PC-9 (cell line): ENCODE measurements at regions of chr17 and their contacts with region 1.

Region 1: DNA sequence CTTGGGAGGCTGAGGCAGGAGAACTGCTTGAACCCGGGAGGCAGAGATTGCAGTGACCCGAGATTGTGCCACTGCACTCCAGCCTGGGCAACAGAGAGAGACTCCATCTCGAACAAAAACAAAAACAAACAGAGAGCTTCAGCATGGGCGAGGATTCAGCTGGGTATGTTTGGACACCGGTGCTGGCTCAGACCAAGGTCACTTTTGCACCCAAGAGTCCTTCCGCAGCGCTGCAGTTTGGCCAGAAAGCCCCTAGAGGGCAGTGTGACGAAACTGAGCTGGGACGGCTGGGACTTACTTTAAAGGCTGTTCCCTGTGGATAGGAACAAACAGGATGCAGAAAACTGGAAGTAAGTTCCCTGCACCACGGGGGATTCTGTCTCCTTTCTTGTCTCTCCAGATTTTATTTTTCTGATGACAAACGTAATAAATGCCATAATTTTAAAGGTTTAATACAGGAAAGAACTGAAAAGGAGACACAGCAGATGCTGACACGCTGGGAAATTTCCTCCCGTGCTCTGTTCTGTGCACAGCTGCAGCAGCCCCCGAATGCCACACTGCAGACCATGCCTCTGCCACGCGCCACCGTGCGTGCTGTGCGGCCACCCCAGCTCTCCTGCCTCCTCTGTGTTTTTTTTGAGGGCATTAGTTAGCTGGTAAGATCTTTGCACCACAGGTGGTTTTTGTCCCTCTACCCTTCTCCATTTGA is 25.2 kb upstream of the USP36 start:
- DNase-seq: peak; percentile 57 to 78
- H3K4me3 ChIP-seq: no peak overlapping the region
- H3K27ac ChIP-seq: no peak overlapping the region
- H3K4me1 ChIP-seq: peaks cover 14% of the 10 kb centered on the region
- H3K27me3 ChIP-seq: no peaks in the 10 kb centered on the region
- CTCF ChIP-seq: peak; percentile 85

Region 2: DNA sequence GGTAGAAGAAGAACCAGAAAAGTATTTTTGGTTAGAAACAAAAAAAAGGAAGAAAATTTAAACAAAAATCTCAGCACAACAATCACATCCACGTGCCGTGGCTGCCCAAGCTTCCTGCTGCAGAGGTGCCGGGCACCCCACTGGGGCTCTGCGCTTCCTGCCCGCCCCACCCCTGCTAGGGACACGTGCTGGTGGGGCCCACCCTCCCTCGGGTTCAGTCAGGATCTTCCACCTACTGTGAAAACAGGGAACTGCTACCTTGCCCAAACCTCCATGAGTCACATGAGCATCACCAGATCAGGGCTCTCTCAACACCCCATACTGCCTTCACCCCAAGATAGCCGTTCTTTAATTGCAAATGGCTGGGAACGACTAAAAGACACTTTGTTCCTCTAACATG is 59.4 kb before region 1 on chr17:
- CTCF ChIA-PET with region 1: no interaction called
- POLR2A ChIA-PET with region 1: no interaction called
- intact Hi-C with region 1: no loop called
- DNase-seq: no peak
- H3K4me3 ChIP-seq: no peak overlapping the region
- H3K27ac ChIP-seq: no peak overlapping the region
- H3K4me1 ChIP-seq: no peaks in the 10 kb centered on the region
- H3K27me3 ChIP-seq: no peaks in the 10 kb centered on the region
- CTCF ChIP-seq: no peak

Region 3: DNA sequence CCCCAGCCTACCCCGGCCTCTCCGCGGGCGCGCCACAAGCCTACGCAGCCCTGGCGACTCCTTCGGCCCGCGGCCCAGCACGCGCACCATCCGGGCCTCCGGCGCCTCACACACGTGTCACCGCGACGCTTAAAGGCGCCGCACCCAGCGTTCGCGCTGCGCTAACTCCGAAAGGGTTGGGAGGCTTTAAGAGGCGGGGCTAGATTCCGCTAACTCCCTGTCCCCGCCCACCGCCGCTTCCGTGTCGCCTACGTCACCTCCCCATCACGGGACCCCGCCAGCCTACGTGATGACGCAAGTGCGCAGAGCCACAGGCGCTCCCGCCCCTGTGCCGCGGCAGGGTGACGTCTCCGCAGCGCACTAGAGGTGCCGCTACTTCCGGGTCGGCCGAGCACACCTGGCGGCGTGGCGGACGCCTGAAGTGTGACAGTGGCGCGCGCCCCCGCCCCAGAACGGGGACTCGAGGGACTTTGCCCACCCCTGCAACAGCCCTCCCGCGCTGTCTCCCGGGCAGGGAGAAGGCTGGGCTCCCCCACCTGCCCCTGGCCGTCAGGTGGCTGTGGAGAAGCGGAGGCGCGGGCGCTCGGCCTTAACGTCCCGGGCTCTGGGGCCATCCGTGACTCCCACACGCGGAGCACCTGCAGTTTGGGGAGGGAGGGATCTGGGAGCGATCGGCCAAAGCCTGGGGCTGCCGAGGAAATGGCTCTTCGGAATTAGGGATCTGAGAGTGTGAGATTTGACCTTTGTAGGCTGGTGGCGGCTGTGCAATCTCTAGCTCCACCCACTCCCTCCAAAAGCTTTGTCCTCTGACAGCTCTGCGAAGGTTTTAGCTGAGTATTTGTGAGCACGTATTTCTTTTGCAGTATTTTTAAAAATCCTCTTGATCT is 24.9 kb before region 1 on chr17 and contains the start of gene USP36:
- CTCF ChIA-PET with region 1: no interaction called
- POLR2A ChIA-PET with region 1: no interaction called
- intact Hi-C with region 1: loop called (anchors 1 kb)
- DNase-seq: peak; percentile 89 to 99
- H3K4me3 ChIP-seq: peak within 1 kb of the TSS; percentile 95
- H3K27ac ChIP-seq: peak within 1 kb of the TSS; percentile 85
- H3K4me1 ChIP-seq: peaks cover 13% of the 10 kb centered on the region
- H3K27me3 ChIP-seq: no peaks in the 10 kb centered on the region
- CTCF ChIP-seq: no peak
- total RNA-seq, gene USP36: 41.4 and 46.2 TPM in 2 replicates

Region 4: GRCh38 chr17:78899361-78900260 is 33.8 kb after region 1 on chr17:
- CTCF ChIA-PET with region 1: interaction called, 4 read pairs
- POLR2A ChIA-PET with region 1: no interaction called
- intact Hi-C with region 1: loop called (anchors 1 kb)
- DNase-seq: peak; percentile 63 to 90
- H3K4me3 ChIP-seq: no peak overlapping the region
- H3K27ac ChIP-seq: no peak overlapping the region; the same call in 1 of the 2 replicates
- H3K4me1 ChIP-seq: peaks cover 14% of the 10 kb centered on the region
- H3K27me3 ChIP-seq: no peaks in the 10 kb centered on the region
- CTCF ChIP-seq: no peak

Region 5: GRCh38 chr17:78970834-78971773 is 105.3 kb after region 1 on chr17:
- CTCF ChIA-PET with region 1: no interaction called
- POLR2A ChIA-PET with region 1: no interaction called
- intact Hi-C with region 1: loop called (anchors 1 kb)
- DNase-seq: peak in 1 of 2 experiments; percentile 71
- H3K4me3 ChIP-seq: no peak overlapping the region
- H3K27ac ChIP-seq: no peak overlapping the region
- H3K4me1 ChIP-seq: no peaks in the 10 kb centered on the region
- H3K27me3 ChIP-seq: no peaks in the 10 kb centered on the region
- CTCF ChIP-seq: peak; percentile 86